PC-9 (cell line): ENCODE measurements at regions of chrX and their contacts with region 1.

Region 1: DNA sequence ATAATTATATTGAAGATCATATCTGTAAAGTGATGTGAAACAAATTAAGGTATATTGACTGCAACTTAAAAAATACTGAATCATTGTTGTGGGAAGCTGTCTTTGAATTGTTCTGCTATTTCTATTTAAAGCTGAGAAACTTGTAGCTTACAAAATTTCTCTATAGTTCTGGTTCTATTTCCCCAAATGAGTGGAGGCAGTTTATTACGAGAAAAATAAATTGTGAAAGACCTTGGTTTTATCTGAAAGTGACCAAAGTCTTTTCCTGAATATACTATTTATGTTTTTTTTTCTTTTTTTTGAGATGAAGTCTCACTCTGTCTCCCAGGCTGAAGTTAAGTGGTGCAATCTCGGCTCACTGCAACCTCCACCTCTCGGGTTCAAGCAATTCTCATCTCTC is 165.4 kb downstream of the SH3BGRL start:
- DNase-seq: no peak
- H3K4me3 ChIP-seq: no peak overlapping the region
- H3K27ac ChIP-seq: no peak overlapping the region
- H3K4me1 ChIP-seq: no peaks in the 10 kb centered on the region
- H3K27me3 ChIP-seq: no peaks in the 10 kb centered on the region
- CTCF ChIP-seq: no peak

Region 2: DNA sequence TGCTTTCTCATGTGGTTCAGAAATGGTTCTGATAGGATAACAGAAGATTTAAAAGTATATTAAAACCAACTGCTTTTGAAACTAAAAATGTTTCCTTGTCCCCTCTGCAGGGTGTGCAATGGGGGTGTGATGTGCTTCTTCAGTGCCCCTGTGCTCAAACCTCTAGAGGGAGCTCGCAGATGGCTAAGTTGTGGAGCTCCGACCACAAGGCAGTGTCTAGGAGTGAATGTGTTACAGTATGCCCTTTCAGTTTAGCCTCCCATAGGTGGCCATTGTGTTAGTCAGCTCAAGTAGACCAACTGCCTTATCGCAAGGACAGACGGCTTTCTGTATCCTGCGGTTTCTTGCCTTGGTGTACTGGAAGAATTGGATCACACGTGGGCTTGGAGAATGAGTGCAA is 816.6 kb before region 1 on chrX:
- CTCF ChIA-PET with region 1: no interaction called
- POLR2A ChIA-PET with region 1: no interaction called
- intact Hi-C with region 1: no loop called
- DNase-seq: no peak
- H3K4me3 ChIP-seq: no peak overlapping the region
- H3K27ac ChIP-seq: no peak overlapping the region
- H3K4me1 ChIP-seq: no peaks in the 10 kb centered on the region
- H3K27me3 ChIP-seq: no peaks in the 10 kb centered on the region
- CTCF ChIP-seq: 0 out of 2 replicates have a peak, but pooled peaks have one; percentile 24

Region 3: GRCh38 chrX:81195712-81196111 is 171.6 kb before region 1 on chrX:
- CTCF ChIA-PET with region 1: no interaction called
- POLR2A ChIA-PET with region 1: no interaction called
- intact Hi-C with region 1: loop called (anchors 10 kb)
- DNase-seq: peak in 1 of 2 experiments; percentile 31
- H3K4me3 ChIP-seq: no peak overlapping the region
- H3K27ac ChIP-seq: no peak overlapping the region
- H3K4me1 ChIP-seq: no peaks in the 10 kb centered on the region
- H3K27me3 ChIP-seq: no peaks in the 10 kb centered on the region
- CTCF ChIP-seq: peak; percentile 69